CD4-positive, alpha-beta T cell (primary cell): ENCODE measurements at regions of chr15 and their contacts with region 1.

Region 1: GRCh38 chr15:56918046-56918938 is at the start of gene TCF12:
- DNase-seq: peak; percentile 78 to 95 (median 84)
- ATAC-seq: peak; percentile 75
- H3K4me3 ChIP-seq: peak within 1 kb of the TSS; percentile 82
- H3K4me3 Mint-ChIP-seq: peak within 1 kb of the TSS; percentile 95
- H3K27ac ChIP-seq: peak within 1 kb of the TSS; percentile 68 to 71
- H3K27ac Mint-ChIP-seq: peak within 1 kb of the TSS; percentile 91
- H3K4me1 ChIP-seq: peaks cover 28% of the 10 kb centered on the region
- H3K4me1 Mint-ChIP-seq: peaks cover 49% of the 10 kb centered on the region
- H3K27me3 ChIP-seq: no peaks in the 10 kb centered on the region
- H3K27me3 Mint-ChIP-seq: no peaks in the 10 kb centered on the region
- CTCF ChIP-seq: peak; percentile 56
- total RNA-seq, gene TCF12: 54.0 TPM

Region 2: GRCh38 chr15:56886932-56887781 is 31.1 kb before region 1 on chr15:
- CTCF ChIA-PET with region 1: interaction called, 5 read pairs
- POLR2A ChIA-PET with region 1: interaction called, 69 read pairs
- intact Hi-C with region 1: loop called (anchors 1 kb)
- DNase-seq: peak; percentile 58 to 94 (median 74)
- ATAC-seq: peak; percentile 86
- H3K4me3 ChIP-seq: peak overlapping the region; percentile 92
- H3K4me3 Mint-ChIP-seq: peak overlapping the region; percentile 92
- H3K27ac ChIP-seq: peak overlapping the region; percentile 77 to 92
- H3K27ac Mint-ChIP-seq: peak overlapping the region; percentile 96
- H3K4me1 ChIP-seq: peaks cover 19% of the 10 kb centered on the region
- H3K4me1 Mint-ChIP-seq: peaks cover 33% of the 10 kb centered on the region
- H3K27me3 ChIP-seq: no peaks in the 10 kb centered on the region
- H3K27me3 Mint-ChIP-seq: no peaks in the 10 kb centered on the region
- CTCF ChIP-seq: no peak

Region 3: GRCh38 chr15:56929399-56929798 is 11.1 kb after region 1 on chr15:
- CTCF ChIA-PET with region 1: interaction called, 5 read pairs
- POLR2A ChIA-PET with region 1: interaction called, 36 read pairs
- intact Hi-C with region 1: no loop called
- DNase-seq: no peak
- ATAC-seq: no peak
- H3K4me3 ChIP-seq: no peak overlapping the region
- H3K4me3 Mint-ChIP-seq: no peak overlapping the region
- H3K27ac ChIP-seq: no peak overlapping the region
- H3K27ac Mint-ChIP-seq: peak overlapping the region; percentile 79
- H3K4me1 ChIP-seq: peaks cover 3% of the 10 kb centered on the region
- H3K4me1 Mint-ChIP-seq: peaks cover 89% of the 10 kb centered on the region
- H3K27me3 ChIP-seq: no peaks in the 10 kb centered on the region
- H3K27me3 Mint-ChIP-seq: no peaks in the 10 kb centered on the region
- CTCF ChIP-seq: no peak

Region 4: DNA sequence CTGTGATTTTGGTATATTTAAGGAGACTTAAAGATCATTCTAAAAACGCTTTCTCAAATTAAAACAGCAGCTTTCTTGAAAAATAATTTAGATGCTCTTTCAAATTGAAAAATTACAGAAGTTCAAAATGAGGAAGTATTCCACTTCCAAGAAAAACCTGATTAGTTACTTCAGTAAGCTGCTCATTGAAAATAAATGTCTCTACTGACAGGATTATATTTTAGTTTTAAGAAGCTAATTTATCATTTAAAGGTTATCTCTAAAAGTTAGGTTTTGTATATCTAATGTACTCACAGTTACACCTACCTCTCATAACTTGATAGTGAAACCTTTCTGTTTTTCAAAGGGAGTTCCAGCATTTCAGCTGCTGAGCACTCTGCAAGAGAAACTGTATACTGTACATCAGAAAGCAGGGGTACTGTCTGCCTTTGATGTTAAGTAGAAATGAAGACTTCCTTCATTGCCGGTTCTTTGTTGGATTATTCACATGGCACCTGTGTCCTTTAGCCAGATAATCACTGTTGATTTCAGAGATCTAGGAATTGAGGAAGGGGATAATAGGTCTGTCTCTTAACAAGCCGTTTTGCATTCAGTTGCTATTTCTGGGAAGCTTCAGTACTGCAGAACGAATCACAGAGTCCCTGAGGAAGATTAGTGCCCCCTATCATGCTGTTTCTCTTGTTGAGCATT is 161.8 kb after region 1 on chr15:
- CTCF ChIA-PET with region 1: no interaction called
- POLR2A ChIA-PET with region 1: no interaction called
- intact Hi-C with region 1: loop called (anchors 2 to 5 kb)
- DNase-seq: peak in 1 of 14 experiments; percentile 4
- ATAC-seq: no peak
- H3K4me3 ChIP-seq: no peak overlapping the region
- H3K4me3 Mint-ChIP-seq: no peak overlapping the region
- H3K27ac ChIP-seq: no peak overlapping the region
- H3K27ac Mint-ChIP-seq: no peak overlapping the region
- H3K4me1 ChIP-seq: peaks cover 4% of the 10 kb centered on the region
- H3K4me1 Mint-ChIP-seq: peaks cover 57% of the 10 kb centered on the region
- H3K27me3 ChIP-seq: no peaks in the 10 kb centered on the region
- H3K27me3 Mint-ChIP-seq: no peaks in the 10 kb centered on the region
- CTCF ChIP-seq: no peak

Region 5: GRCh38 chr15:57213862-57214261 is 295.6 kb after region 1 on chr15:
- CTCF ChIA-PET with region 1: no interaction called
- POLR2A ChIA-PET with region 1: interaction called, 3 read pairs
- intact Hi-C with region 1: loop called (anchors 5 to 10 kb)
- DNase-seq: peak in 3 of 14 experiments; percentile 38 to 41 (median 40)
- ATAC-seq: no peak
- H3K4me3 ChIP-seq: no peak overlapping the region
- H3K4me3 Mint-ChIP-seq: no peak overlapping the region
- H3K27ac ChIP-seq: no peak overlapping the region
- H3K27ac Mint-ChIP-seq: no peak overlapping the region
- H3K4me1 ChIP-seq: no peaks in the 10 kb centered on the region
- H3K4me1 Mint-ChIP-seq: peaks cover 40% of the 10 kb centered on the region
- H3K27me3 ChIP-seq: no peaks in the 10 kb centered on the region
- H3K27me3 Mint-ChIP-seq: no peaks in the 10 kb centered on the region
- CTCF ChIP-seq: peak; percentile 49